AG04450 (cell line): ENCODE measurements at regions of chr3 and their contacts with region 1.

Region 1: DNA sequence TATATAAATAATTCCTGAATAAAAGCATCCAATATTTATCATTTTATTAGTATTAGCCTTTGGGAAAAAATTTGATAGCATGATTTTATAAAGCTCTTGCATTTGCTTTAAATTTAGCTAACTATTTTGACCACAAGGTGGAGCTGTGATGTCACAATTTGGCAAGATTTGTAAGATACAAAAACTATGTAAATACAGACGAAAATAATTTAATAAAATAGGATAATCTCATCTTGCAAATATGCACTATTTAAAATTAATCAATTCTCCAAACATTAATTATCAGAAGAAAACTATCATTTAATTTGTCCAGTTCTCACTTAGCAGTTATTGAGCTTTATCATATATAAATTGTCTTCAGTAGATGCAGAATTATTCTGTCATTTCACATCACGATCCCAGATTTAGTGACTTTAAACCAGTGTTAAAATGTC is 95.4 kb downstream of the PLOD2 start:
- DNase-seq: peak; percentile 48
- H3K4me3 ChIP-seq: no peak overlapping the region
- H3K27ac ChIP-seq: no peak overlapping the region
- H3K27me3 ChIP-seq: no peaks in the 10 kb centered on the region
- CTCF ChIP-seq: peak; percentile 72

Region 2: GRCh38 chr3:145776782-145777408 is 288.7 kb before region 1 on chr3:
- CTCF ChIA-PET with region 1: interaction called, 10 read pairs
- POLR2A ChIA-PET with region 1: no interaction called
- DNase-seq: peak; percentile 3
- H3K4me3 ChIP-seq: no peak overlapping the region
- H3K27ac ChIP-seq: no peak overlapping the region
- H3K27me3 ChIP-seq: no peaks in the 10 kb centered on the region
- CTCF ChIP-seq: peak; percentile 70

Region 3: DNA sequence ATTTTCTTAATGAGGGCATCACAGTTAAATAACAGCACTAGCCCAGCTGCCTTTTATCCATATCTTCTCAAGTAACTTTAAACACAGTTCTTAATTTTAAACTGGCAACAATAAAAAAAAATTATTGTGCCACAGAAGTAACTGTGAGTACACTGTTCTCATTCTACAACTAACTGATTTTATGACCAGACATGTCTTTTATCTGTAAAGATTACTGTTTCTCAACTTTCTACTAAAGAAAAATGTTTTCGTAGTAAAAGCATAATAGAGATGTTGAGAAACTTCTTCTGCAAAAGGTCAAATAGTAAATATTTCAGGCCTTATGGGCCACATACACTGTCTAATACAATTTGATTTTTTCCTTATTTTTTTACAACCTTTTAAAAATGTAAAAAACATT is 63.3 kb after region 1 on chr3:
- CTCF ChIA-PET with region 1: interaction called, 10 read pairs
- POLR2A ChIA-PET with region 1: no interaction called
- DNase-seq: no peak
- H3K4me3 ChIP-seq: no peak overlapping the region
- H3K27ac ChIP-seq: no peak overlapping the region
- H3K27me3 ChIP-seq: no peaks in the 10 kb centered on the region
- CTCF ChIP-seq: no peak

Region 4: GRCh38 chr3:146177519-146177918 is 111.9 kb after region 1 on chr3:
- CTCF ChIA-PET with region 1: interaction called, 13 read pairs
- POLR2A ChIA-PET with region 1: no interaction called
- DNase-seq: no peak
- H3K4me3 ChIP-seq: no peak overlapping the region
- H3K27ac ChIP-seq: no peak overlapping the region
- H3K27me3 ChIP-seq: no peaks in the 10 kb centered on the region
- CTCF ChIP-seq: no peak

Region 5: GRCh38 chr3:146577662-146578061 is 512.1 kb after region 1 on chr3:
- CTCF ChIA-PET with region 1: interaction called, 13 read pairs
- POLR2A ChIA-PET with region 1: no interaction called
- DNase-seq: peak; percentile 43
- H3K4me3 ChIP-seq: no peak overlapping the region
- H3K27ac ChIP-seq: no peak overlapping the region
- H3K27me3 ChIP-seq: no peaks in the 10 kb centered on the region
- CTCF ChIP-seq: peak; percentile 47